Activated T-helper 1 cell treated with anti-CD3 and anti-CD28 coated beads, Interleukin-12 subunit alpha, Interleukin-12 subunit beta, Interleukin-2, Interleukin-4 antibody, amounts not matched to agents 30 ng/mL and 10 ng/mL and 1 ng/mL, durations not matched to agents 14 hours and 24 hours and 36 hours (primary cell): ENCODE measurements at regions of chr21 and their contacts with region 1.

Region 1: GRCh38 chr21:21163904-21164303 is 165.7 kb downstream of the NCAM2 start:
- DNase-seq: no peak
- H3K4me3 Mint-ChIP-seq: no peak overlapping the region
- H3K27ac Mint-ChIP-seq: no peak overlapping the region
- H3K4me1 Mint-ChIP-seq: peaks cover 7% of the 10 kb centered on the region
- H3K27me3 Mint-ChIP-seq: peaks cover 7% of the 10 kb centered on the region

Region 2: DNA sequence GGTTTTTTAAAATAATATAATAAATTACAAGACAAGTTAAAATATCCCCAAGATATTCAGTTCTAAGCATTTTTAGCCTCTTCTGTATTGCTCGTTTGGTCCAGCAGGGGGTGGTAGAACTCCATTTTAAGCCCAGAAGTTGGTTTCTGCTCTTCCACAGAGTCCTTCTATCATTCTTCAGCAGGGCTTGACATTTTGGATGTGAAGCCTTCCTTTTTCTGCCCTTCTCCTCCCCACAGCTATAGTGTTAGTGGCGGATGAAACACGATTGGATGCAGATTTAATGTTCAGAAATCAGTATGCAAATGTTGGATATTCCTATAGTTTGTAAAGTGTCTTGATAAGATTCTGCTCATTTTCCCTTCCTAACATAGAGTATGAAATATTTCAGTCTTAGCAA is 164.2 kb before region 1 on chr21:
- intact Hi-C with region 1: loop called (anchors 10 kb)
- DNase-seq: no peak
- H3K4me3 Mint-ChIP-seq: no peak overlapping the region
- H3K27ac Mint-ChIP-seq: no peak overlapping the region
- H3K4me1 Mint-ChIP-seq: peaks cover 6% of the 10 kb centered on the region
- H3K27me3 Mint-ChIP-seq: peaks cover 29% of the 10 kb centered on the region

Region 3: DNA sequence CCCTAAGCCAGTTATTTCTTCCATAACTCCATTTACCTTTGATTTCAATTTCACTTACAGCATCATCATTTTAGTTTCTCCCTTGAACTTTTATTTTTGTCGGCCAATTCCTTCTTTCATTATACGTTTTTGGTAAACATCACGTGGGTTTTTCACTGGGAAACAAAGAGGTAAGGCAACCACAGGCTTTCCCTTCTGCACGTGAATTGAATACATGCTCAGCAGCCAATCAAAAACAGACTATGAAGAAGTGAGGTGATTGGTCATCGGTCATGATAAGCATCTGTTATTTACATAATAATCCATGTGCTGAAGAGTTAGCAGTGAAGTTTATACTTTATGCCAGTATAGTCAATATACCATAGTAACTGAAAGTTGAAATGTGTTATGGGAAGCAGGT is 66.9 kb before region 1 on chr21:
- intact Hi-C with region 1: no loop called
- DNase-seq: no peak
- H3K4me3 Mint-ChIP-seq: no peak overlapping the region
- H3K27ac Mint-ChIP-seq: no peak overlapping the region
- H3K4me1 Mint-ChIP-seq: no peaks in the 10 kb centered on the region
- H3K27me3 Mint-ChIP-seq: no peaks in the 10 kb centered on the region

Region 4: DNA sequence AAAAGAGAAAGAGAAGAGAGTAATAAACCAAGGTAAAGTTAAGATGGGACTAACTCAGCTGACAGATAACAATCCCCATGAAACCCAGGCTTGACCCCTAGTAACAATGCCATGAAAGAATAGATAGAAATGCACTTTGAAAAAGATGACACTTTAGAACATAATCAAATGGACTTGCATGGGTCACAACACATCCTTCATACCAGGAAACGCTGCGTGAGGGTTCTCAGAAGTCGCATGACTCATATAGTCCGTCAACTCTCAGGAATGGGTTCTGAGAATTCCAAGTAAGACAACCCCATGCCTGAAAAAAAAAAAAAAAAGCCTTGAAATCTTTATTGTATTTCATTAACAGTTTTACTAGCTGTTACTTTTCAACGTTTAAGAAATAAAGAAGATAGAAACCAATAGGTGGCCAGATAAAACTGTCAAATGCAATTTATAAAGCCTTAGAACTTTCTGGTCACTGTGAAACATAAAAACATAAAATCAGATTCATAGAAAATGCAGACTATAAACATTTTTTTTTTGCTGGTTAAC is 36.3 kb after region 1 on chr21:
- intact Hi-C with region 1: loop called (anchors 5 kb)
- DNase-seq: peak; percentile 11
- H3K4me3 Mint-ChIP-seq: peak overlapping the region; percentile 64
- H3K27ac Mint-ChIP-seq: peak overlapping the region; percentile 91
- H3K4me1 Mint-ChIP-seq: peaks cover 43% of the 10 kb centered on the region
- H3K27me3 Mint-ChIP-seq: no peaks in the 10 kb centered on the region

Region 5: DNA sequence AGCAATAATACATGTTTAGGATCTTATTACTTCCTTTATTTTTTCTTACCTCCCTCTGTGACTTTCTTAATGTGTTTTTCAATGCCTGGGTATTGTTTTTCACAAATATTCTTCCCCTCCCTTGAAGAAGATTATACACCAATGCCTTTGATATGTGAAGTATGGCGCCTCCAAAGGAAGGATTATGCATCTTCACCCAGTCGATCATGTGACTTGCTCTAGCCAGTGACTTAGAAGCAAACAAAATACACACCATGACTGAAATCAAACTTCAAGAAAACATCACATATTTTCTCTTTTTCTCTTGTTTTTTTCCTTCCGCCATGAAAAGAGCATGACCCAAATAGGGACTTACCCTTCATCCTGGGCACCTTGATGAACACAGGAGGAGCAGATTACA is 131.4 kb after region 1 on chr21:
- intact Hi-C with region 1: loop called (anchors 1 kb)
- DNase-seq: no peak
- H3K4me3 Mint-ChIP-seq: no peak overlapping the region
- H3K27ac Mint-ChIP-seq: no peak overlapping the region
- H3K4me1 Mint-ChIP-seq: no peaks in the 10 kb centered on the region
- H3K27me3 Mint-ChIP-seq: no peaks in the 10 kb centered on the region

Region 6: DNA sequence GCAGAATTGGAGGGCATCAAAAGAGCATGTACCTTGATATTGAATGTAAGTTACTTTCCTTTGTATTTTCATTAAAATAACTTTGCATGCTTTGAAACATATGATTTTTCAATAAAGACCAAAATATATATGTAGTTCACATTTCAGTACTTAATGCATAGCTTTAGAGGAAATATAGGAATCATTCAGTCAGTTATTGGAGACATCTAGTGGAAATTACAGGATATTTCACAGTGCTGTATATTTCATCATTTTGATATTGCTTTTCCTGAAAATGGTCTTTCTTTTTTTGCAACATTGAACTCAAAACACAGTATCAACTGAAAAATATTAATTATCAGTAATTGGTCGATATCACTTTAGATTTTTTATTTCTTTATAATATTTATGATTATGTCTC is 210.1 kb after region 1 on chr21:
- intact Hi-C with region 1: loop called (anchors 1 kb)
- DNase-seq: no peak
- H3K4me3 Mint-ChIP-seq: no peak overlapping the region
- H3K27ac Mint-ChIP-seq: no peak overlapping the region
- H3K4me1 Mint-ChIP-seq: no peaks in the 10 kb centered on the region
- H3K27me3 Mint-ChIP-seq: no peaks in the 10 kb centered on the region

Region 7: DNA sequence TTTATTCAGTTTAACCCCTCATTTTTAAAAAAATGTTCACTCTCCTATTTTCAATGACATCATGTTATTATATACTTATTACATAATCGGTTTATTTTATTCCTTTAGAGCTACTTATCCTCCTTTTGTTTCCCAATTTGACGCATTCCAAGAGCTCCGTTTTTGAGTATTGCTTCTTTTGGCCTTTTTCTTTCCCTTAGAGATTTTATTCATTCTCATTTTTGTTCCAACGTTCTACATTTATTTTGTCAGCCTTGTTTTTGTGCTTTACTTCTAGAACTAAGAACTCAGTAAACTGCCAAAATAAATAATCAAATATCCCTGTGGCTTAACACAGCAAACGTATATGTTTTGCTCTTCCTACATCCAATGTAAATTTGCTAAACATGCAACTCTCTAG is 603.4 kb after region 1 on chr21:
- intact Hi-C with region 1: no loop called
- DNase-seq: no peak
- H3K4me3 Mint-ChIP-seq: no peak overlapping the region
- H3K27ac Mint-ChIP-seq: no peak overlapping the region
- H3K4me1 Mint-ChIP-seq: no peaks in the 10 kb centered on the region
- H3K27me3 Mint-ChIP-seq: no peaks in the 10 kb centered on the region

Region 8: GRCh38 chr21:22791986-22792560 is 1628.2 kb after region 1 on chr21:
- intact Hi-C with region 1: loop called (anchors 2 kb)
- DNase-seq: no peak
- H3K4me3 Mint-ChIP-seq: no peak overlapping the region
- H3K27ac Mint-ChIP-seq: no peak overlapping the region
- H3K4me1 Mint-ChIP-seq: no peaks in the 10 kb centered on the region
- H3K27me3 Mint-ChIP-seq: peaks cover 1% of the 10 kb centered on the region